GM12878 (cell line): ENCODE measurements at regions of chr12 and their contacts with region 1.

Region 1: GRCh38 chr12:89949457-89950195 is 241.0 kb upstream of the ATP2B1 start:
- DNase-seq: peak; percentile 83
- ATAC-seq: peak; percentile 87
- H3K4me3 ChIP-seq: peak overlapping the region; percentile 33; the same call in 1 of the 2 replicates
- H3K27ac ChIP-seq: peak overlapping the region; percentile 83; the same call in 1 of the 2 replicates
- H3K4me1 ChIP-seq: peaks cover 15% of the 10 kb centered on the region; the same call in 1 of the 2 replicates
- H3K27me3 ChIP-seq: no peaks in the 10 kb centered on the region
- CTCF ChIP-seq: peak; percentile 31 to 63 (median 35); a peak in 5 of 6 replicates
- EP300 ChIP-seq: peak; percentile 86 to 96; a peak in 3 of 4 replicates
- POLR2A ChIP-seq: no peak
- RAD21 ChIP-seq: peak; percentile 71

Region 2: GRCh38 chr12:89815225-89815624 is 134.4 kb before region 1 on chr12:
- CTCF ChIA-PET with region 1: no interaction called
- POLR2A ChIA-PET with region 1: no interaction called
- RAD21 ChIA-PET with region 1: no interaction called
- SMC1A ChIA-PET with region 1: no interaction called
- in situ Hi-C with region 1: no loop called
- intact Hi-C with region 1: no loop called
- DNase-seq: no peak
- ATAC-seq: no peak
- H3K4me3 ChIP-seq: no peak overlapping the region
- H3K27ac ChIP-seq: no peak overlapping the region
- H3K4me1 ChIP-seq: no peaks in the 10 kb centered on the region
- H3K27me3 ChIP-seq: no peaks in the 10 kb centered on the region
- CTCF ChIP-seq: no peak
- EP300 ChIP-seq: no peak
- POLR2A ChIP-seq: no peak
- RAD21 ChIP-seq: no peak

Region 3: GRCh38 chr12:89856431-89856830 is 93.2 kb before region 1 on chr12:
- CTCF ChIA-PET with region 1: interaction called, 4 read pairs
- POLR2A ChIA-PET with region 1: no interaction called
- RAD21 ChIA-PET with region 1: interaction called, 3 read pairs
- SMC1A ChIA-PET with region 1: no interaction called
- in situ Hi-C with region 1: no loop called
- intact Hi-C with region 1: loop called (anchors 2 kb)
- DNase-seq: peak; percentile 85
- ATAC-seq: peak; percentile 90
- H3K4me3 ChIP-seq: no peak overlapping the region
- H3K27ac ChIP-seq: peak overlapping the region; percentile 42
- H3K4me1 ChIP-seq: peaks cover 43% of the 10 kb centered on the region
- H3K27me3 ChIP-seq: no peaks in the 10 kb centered on the region
- CTCF ChIP-seq: no peak
- EP300 ChIP-seq: peak; percentile 97
- POLR2A ChIP-seq: no peak
- RAD21 ChIP-seq: peak; percentile 27; the same call in 1 of the 2 replicates

Region 4: GRCh38 chr12:89927226-89927698 is 22.4 kb before region 1 on chr12:
- CTCF ChIA-PET with region 1: interaction called, 22 read pairs
- POLR2A ChIA-PET with region 1: interaction called, 13 read pairs
- RAD21 ChIA-PET with region 1: interaction called, 44 read pairs
- SMC1A ChIA-PET with region 1: interaction called, 154 read pairs
- in situ Hi-C with region 1: no loop called
- intact Hi-C with region 1: loop called (anchors 2 kb)
- DNase-seq: peak; percentile 79
- ATAC-seq: peak; percentile 91
- H3K4me3 ChIP-seq: peak overlapping the region; percentile 67
- H3K27ac ChIP-seq: peak overlapping the region; percentile 96
- H3K4me1 ChIP-seq: peaks cover 3% of the 10 kb centered on the region; the same call in 1 of the 2 replicates
- H3K27me3 ChIP-seq: no peaks in the 10 kb centered on the region
- CTCF ChIP-seq: no peak
- EP300 ChIP-seq: peak; percentile 85 to 97; a peak in 3 of 4 replicates
- POLR2A ChIP-seq: no peak
- RAD21 ChIP-seq: peak; percentile 29; the same call in 1 of the 2 replicates

Region 5: DNA sequence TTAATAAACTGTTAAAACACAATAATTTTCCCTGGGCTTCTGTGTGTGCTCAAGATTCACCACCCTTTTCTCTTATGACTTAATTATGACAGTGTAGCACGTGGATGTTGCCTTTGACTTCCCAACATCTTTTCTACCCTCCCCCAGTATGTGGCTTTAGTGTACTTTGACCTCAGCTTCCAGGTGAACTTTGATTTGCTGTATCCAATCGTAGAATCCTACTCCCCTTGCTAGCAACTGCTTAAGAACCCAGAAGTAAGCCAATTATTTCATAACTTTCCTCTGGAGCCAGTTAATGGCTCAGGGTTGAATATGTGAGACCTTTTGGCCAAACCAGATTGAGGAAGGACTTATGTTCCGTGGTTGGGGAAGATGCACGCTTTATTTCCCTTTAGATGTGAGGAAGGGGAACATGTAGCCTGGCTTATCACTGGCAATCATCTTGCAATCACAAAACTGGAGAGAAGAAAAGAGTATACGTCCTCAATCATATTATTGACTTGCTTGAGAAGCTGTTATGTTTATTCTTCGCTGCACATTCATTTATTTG is 18.6 kb after region 1 on chr12:
- CTCF ChIA-PET with region 1: interaction called, 6 read pairs
- POLR2A ChIA-PET with region 1: no interaction called
- RAD21 ChIA-PET with region 1: interaction called, 4 read pairs
- SMC1A ChIA-PET with region 1: interaction called, 94 read pairs
- in situ Hi-C with region 1: no loop called
- intact Hi-C with region 1: no loop called
- DNase-seq: no peak
- ATAC-seq: no peak
- H3K4me3 ChIP-seq: no peak overlapping the region
- H3K27ac ChIP-seq: no peak overlapping the region
- H3K4me1 ChIP-seq: no peaks in the 10 kb centered on the region
- H3K27me3 ChIP-seq: no peaks in the 10 kb centered on the region
- CTCF ChIP-seq: no peak
- EP300 ChIP-seq: no peak
- POLR2A ChIP-seq: no peak
- RAD21 ChIP-seq: no peak

Region 6: DNA sequence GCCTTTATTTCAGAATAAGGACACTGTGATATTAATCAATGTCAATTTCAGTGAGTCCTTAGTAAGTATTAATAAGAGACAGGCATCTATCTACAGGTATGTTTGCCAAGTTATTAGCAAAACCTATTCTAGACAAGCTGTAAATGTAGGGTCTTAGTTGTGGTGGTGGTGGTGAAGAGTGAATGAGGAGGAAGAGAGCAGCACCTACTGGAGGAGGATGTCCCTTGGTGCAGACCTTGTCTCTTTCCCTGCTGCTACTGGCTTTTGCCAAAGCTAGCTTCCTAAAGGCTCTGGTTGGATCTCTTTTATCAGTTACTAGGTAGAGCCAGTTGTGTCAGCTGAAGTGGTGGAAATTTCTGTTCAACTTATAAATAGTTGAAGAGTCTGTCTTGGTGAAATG is 63.8 kb after region 1 on chr12:
- CTCF ChIA-PET with region 1: no interaction called
- POLR2A ChIA-PET with region 1: no interaction called
- RAD21 ChIA-PET with region 1: interaction called, 15 read pairs
- SMC1A ChIA-PET with region 1: interaction called, 7 read pairs
- in situ Hi-C with region 1: no loop called
- intact Hi-C with region 1: no loop called
- DNase-seq: peak; percentile 8
- ATAC-seq: peak; percentile 94
- H3K4me3 ChIP-seq: no peak overlapping the region
- H3K27ac ChIP-seq: no peak overlapping the region
- H3K4me1 ChIP-seq: no peaks in the 10 kb centered on the region
- H3K27me3 ChIP-seq: no peaks in the 10 kb centered on the region
- CTCF ChIP-seq: peak; percentile 45 to 73 (median 54); a peak in 5 of 6 replicates
- EP300 ChIP-seq: no peak
- POLR2A ChIP-seq: no peak
- RAD21 ChIP-seq: peak; percentile 60